HepG2 (cell line): ENCODE measurements at regions of chr5 and their contacts with region 1.

Region 1: DNA sequence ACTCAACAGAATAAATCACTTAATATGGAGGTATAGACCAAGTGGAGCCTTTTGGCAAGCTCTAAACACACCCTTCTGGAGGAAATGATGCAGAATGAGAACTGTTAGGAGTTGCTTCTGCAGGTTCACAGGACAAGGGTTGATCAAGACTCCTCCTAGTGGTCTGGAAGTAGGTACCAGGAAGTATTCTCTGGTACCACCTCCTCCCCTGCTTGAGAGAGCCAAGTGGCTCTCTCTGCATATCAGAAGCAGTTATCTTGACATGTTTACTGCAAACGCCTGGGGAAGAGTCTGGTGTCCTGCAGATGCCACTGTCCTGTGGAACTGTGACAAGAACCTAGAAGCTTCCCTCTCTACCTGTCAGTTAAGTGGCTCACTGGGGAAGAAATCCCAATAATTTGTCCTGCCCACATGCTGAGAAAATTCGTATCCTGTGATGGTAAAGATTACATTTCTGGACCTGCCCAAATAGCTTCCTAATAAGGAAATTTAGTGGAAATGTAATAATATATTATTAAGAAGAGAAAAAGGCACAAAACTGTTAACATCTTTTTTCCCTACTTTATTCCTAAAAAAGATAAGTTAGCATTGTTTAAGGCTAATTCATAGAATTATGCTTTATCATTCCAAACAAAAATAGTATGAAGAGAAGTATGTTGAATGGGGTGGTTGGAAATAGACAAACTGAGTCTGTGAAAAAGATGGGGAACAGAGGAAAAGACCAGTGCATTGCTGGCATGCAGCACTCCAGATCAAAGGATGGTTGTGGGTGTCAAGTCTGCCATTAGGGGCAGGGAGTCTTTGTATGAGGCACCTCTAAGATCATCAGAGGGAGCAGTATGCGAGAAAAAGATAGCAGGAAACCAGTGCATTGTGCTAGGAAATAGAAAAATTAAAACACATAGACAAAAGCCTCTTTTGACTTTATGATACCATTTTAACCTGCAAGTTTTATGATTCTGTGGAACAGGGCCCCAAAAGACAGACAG is 118.8 kb downstream of the CDC42SE2 start:
- DNase-seq: peak; percentile 66
- ATAC-seq: peak; percentile 74
- H3K4me3 ChIP-seq: no peak overlapping the region
- H3K27ac ChIP-seq: peak overlapping the region; percentile 7
- H3K4me1 ChIP-seq: peaks cover 76% of the 10 kb centered on the region
- H3K27me3 ChIP-seq: no peaks in the 10 kb centered on the region
- CTCF ChIP-seq: peak; percentile 69
- EP300 ChIP-seq: no peak
- POLR2A ChIP-seq: no peak
- RAD21 ChIP-seq: peak; percentile 57

Region 2: GRCh38 chr5:131165119-131165727 is 217.5 kb before region 1 on chr5 and contains the start of gene HINT1:
- CTCF ChIA-PET with region 1: interaction called, 6 read pairs
- POLR2A ChIA-PET with region 1: interaction called, 3 read pairs
- in situ Hi-C with region 1: loop called (anchors 5 kb)
- intact Hi-C with region 1: loop called (anchors 1 kb)
- DNase-seq: peak; percentile 82
- ATAC-seq: peak; percentile 93
- H3K4me3 ChIP-seq: peak within 1 kb of the TSS; percentile 78 to 93 (median 91)
- H3K27ac ChIP-seq: peak within 1 kb of the TSS; percentile 98
- H3K4me1 ChIP-seq: peaks cover 53% of the 10 kb centered on the region
- H3K27me3 ChIP-seq: no peaks in the 10 kb centered on the region; a peak in 1 of 5 replicates
- CTCF ChIP-seq: peak; percentile 76
- EP300 ChIP-seq: no peak
- POLR2A ChIP-seq: peak; percentile 90 to 92
- RAD21 ChIP-seq: 0 out of 2 replicates have a peak, but pooled peaks have one; percentile 5
- total RNA-seq, gene HINT1: 428 and 545 TPM in 2 replicates

Region 3: DNA sequence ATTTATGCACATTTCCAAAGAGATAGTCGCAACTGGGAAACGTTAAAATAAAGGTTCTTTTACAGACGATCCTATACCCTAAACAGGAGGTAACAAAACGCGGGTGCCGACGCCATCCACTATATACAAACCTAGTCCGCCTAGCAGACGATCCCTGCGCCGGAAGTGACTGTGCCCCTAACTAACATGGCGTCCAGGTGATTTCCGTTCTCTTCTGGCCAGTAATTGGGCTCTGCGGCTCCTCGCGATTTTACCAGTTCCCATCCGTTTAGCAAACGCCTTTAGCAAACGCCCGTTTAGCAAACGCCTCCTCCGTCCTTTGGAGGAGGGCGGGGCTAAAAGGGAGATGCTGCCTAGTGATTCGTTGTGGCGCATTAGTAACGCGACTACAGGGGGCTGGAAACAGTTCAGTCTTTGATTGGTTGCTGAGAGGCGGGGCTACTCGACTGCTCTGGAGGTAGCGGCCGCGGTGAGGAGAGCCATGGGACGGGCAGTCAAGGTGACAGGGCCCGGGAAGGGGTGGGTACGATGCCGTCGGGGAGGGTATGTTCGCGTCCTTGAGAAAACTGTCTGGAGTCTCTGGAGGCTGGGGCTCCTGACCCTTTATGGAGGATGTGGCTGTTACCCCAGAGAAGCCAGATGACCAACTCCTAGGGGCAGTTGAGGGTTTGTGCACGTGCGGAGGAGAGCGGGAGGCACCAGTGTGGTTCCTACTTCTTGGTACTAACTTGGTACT is 212.0 kb before region 1 on chr5 and contains the start of gene LYRM7:
- CTCF ChIA-PET with region 1: no interaction called
- POLR2A ChIA-PET with region 1: no interaction called
- in situ Hi-C with region 1: loop called (anchors 5 kb)
- intact Hi-C with region 1: no loop called
- DNase-seq: peak; percentile 99
- ATAC-seq: peak; percentile 99
- H3K4me3 ChIP-seq: peak within 1 kb of the TSS; percentile 65 to 84 (median 82)
- H3K27ac ChIP-seq: peak within 1 kb of the TSS; percentile 78
- H3K4me1 ChIP-seq: peaks cover 29% of the 10 kb centered on the region
- H3K27me3 ChIP-seq: no peaks in the 10 kb centered on the region; a peak in 1 of 5 replicates
- CTCF ChIP-seq: no peak
- EP300 ChIP-seq: no peak
- POLR2A ChIP-seq: peak; percentile 76 to 81
- RAD21 ChIP-seq: 0 out of 2 replicates have a peak, but pooled peaks have one; percentile 11
- total RNA-seq, gene LYRM7: 5.5 and 9.4 TPM in 2 replicates

Region 4: GRCh38 chr5:131263648-131264450 is 118.9 kb before region 1 on chr5 and contains the start of gene CDC42SE2:
- CTCF ChIA-PET with region 1: no interaction called
- POLR2A ChIA-PET with region 1: interaction called, 6 read pairs
- in situ Hi-C with region 1: no loop called
- intact Hi-C with region 1: loop called (anchors 1 kb)
- DNase-seq: peak; percentile 66
- ATAC-seq: peak; percentile 97
- H3K4me3 ChIP-seq: peak within 1 kb of the TSS; percentile 94 to 99 (median 96)
- H3K27ac ChIP-seq: peak within 1 kb of the TSS; percentile 92
- H3K4me1 ChIP-seq: peaks cover 32% of the 10 kb centered on the region
- H3K27me3 ChIP-seq: no peaks in the 10 kb centered on the region; a peak in 1 of 5 replicates
- CTCF ChIP-seq: no peak
- EP300 ChIP-seq: no peak; a peak in 1 of 4 replicates
- POLR2A ChIP-seq: peak; percentile 89 to 92
- RAD21 ChIP-seq: peak; percentile 54; the same call in 1 of the 2 replicates
- total RNA-seq, gene CDC42SE2: 25.0 and 40.7 TPM in 2 replicates

Region 5: GRCh38 chr5:131277875-131278740 is 104.6 kb before region 1 on chr5:
- CTCF ChIA-PET with region 1: no interaction called
- POLR2A ChIA-PET with region 1: no interaction called
- in situ Hi-C with region 1: loop called (anchors 5 kb)
- intact Hi-C with region 1: no loop called
- DNase-seq: no peak
- ATAC-seq: peak; percentile 83
- H3K4me3 ChIP-seq: no peak overlapping the region
- H3K27ac ChIP-seq: peak overlapping the region; percentile 43
- H3K4me1 ChIP-seq: peaks cover 35% of the 10 kb centered on the region
- H3K27me3 ChIP-seq: no peaks in the 10 kb centered on the region
- CTCF ChIP-seq: no peak
- EP300 ChIP-seq: no peak
- POLR2A ChIP-seq: no peak
- RAD21 ChIP-seq: no peak